MCF 10A (cell line): ENCODE measurements at regions of chr5 and their contacts with region 1.

Region 1: GRCh38 chr5:60677844-60678664 is 21.9 kb downstream of the DEPDC1B start:
- DNase-seq: peak; percentile 58
- H3K4me3 Mint-ChIP-seq: peak overlapping the region; percentile 13
- H3K27ac Mint-ChIP-seq: peak overlapping the region; percentile 84
- H3K4me1 Mint-ChIP-seq: no peaks in the 10 kb centered on the region
- H3K27me3 Mint-ChIP-seq: no peaks in the 10 kb centered on the region
- CTCF ChIP-seq: peak; percentile 47

Region 2: DNA sequence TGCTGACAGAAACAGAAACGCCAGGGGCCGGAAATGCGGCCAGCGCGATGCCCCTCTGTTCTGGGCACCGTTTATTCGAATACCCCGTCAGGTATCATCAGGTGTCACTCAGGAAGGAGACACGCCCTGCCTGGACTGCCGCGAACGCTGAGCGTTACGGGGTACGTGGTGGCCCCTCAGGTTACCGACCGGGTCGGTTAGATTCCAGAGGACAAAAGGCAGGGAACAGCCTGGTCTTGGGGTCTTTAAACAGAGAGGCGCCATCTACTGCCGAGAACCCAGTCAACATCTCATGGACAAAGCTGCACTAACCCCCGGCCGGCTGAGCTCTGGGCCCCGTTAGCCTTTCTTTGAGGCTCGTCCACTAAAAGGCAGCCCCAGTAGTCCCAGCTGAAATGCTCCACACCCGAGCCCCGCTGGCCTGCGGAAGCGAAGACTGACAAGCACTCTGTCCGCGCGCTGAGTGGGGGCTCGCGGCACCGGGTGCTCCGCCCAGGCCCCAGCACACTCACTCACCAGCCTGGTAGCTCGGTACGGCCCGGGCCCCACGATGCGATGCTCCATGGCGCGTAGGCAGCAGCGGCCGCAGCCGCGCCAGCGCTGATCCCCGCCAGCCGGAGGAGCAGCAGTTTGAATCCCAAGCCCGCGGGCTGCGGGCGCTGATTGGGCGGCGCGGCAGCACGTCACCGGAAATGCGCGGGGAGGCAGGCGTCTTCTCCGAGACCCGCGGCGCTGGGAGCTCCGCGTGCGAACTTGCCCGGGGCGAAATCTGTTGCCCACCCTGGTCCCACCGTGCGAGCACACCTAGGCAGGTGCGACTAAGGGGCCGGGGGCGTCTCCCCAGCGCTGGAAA is 21.7 kb after region 1 on chr5 and contains the start of gene DEPDC1B:
- CTCF ChIA-PET with region 1: interaction called, 24 read pairs
- POLR2A ChIA-PET with region 1: interaction called, 69 read pairs
- intact Hi-C with region 1: no loop called
- DNase-seq: peak; percentile 90
- H3K4me3 Mint-ChIP-seq: peak within 1 kb of the TSS; percentile 90
- H3K27ac Mint-ChIP-seq: peak within 1 kb of the TSS; percentile 92
- H3K4me1 Mint-ChIP-seq: peaks cover 7% of the 10 kb centered on the region
- H3K27me3 Mint-ChIP-seq: no peaks in the 10 kb centered on the region
- CTCF ChIP-seq: peak; percentile 26
- total RNA-seq, gene DEPDC1B: 6.0 and 11.3 TPM in 2 replicates

Region 3: DNA sequence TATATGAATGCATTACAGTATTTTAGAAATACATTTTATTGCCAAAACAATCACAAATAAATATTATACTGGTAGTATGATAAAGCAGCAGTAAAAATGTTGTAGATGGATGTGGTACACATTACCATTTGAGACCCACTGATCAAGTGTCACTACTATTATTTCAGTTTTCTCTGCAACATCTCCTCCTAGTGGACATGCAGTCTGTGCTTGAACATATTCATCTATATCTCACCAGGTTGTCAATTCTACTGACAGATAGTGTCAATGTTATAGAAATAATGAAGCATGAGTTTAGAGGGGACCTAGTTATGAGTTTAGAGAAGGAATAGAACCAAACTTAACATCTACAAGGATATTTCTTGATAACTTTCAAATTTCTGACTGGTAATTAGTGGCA is 205.2 kb after region 1 on chr5:
- CTCF ChIA-PET with region 1: interaction called, 11 read pairs
- POLR2A ChIA-PET with region 1: interaction called, 3 read pairs
- intact Hi-C with region 1: loop called (anchors 1 kb)
- DNase-seq: peak; percentile 16
- H3K4me3 Mint-ChIP-seq: no peak overlapping the region
- H3K27ac Mint-ChIP-seq: no peak overlapping the region
- H3K4me1 Mint-ChIP-seq: no peaks in the 10 kb centered on the region
- H3K27me3 Mint-ChIP-seq: no peaks in the 10 kb centered on the region
- CTCF ChIP-seq: peak; percentile 26

Region 4: DNA sequence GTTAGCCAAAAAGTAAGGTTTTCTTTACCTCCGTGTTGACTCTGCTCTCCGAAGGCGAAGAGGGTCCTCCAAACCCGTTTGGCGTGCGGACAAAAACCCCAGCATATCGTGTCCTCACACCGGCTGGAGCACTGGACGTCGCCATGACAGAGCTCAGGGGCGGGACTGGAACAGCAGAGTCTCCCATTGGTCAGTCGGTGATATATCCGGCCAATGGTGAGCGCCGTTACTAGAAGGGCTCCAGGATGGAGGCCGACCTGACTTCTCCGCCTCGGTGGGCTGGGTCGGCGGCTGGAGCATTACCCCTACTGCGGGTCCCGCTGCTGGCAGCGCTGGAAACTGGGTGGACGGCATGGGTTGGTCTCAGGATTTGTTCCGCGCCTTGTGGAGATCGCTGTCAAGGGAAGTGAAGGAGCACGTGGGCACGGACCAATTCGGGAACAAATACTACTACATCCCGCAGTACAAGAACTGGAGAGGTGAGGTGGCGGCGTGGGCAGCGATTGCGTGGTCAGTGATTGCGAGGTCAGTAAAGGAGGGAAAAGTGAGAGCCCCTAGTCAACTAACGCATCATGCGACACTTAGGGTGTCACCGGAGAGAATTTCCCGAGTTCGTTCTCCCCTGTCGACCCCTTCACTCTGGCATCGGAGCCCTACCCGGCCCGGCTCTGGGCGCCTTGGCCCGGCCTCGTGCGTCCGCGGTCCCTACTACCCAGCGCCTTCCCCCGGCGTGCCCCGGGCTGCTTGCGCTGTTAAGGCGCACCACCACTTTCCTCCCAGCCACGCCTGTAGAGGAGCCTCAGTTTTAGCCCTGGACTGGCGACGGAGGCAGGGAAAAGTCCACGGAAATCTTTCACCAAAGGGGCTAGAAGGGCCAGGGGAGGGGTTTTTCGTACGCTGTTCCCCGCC is 267.1 kb after region 1 on chr5 and contains the starts of genes ERCC8 and NDUFAF2:
- CTCF ChIA-PET with region 1: interaction called, 11 read pairs
- POLR2A ChIA-PET with region 1: interaction called, 8 read pairs
- intact Hi-C with region 1: loop called (anchors 5 kb)
- DNase-seq: peak; percentile 95
- H3K4me3 Mint-ChIP-seq: no peak within 1 kb of the TSS
- H3K27ac Mint-ChIP-seq: no peak within 1 kb of the TSS
- H3K4me1 Mint-ChIP-seq: no peaks in the 10 kb centered on the region
- H3K27me3 Mint-ChIP-seq: no peaks in the 10 kb centered on the region
- CTCF ChIP-seq: no peak
- total RNA-seq, gene ERCC8: 13.7 and 17.2 TPM in 2 replicates
- total RNA-seq, gene NDUFAF2: 120 and 141 TPM in 2 replicates

Region 5: DNA sequence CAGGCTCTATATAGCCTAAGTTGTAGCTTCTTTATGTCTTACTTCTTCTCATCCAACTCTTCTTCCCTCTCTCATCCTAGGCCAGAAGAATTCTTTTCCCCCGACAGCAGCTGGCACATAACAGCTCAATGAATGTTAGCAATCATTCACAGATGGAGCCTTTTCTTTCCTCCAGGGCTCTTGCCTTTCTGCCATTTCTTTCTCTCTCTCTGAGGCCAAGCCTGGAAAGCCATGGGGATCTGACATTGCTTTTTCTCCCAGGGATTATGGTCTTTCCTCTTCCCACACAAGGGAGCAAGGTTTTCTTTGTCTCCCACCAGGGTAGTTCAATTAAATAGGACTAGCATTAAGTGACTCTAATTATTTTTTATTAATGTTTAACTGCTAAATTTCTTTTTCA is 463.7 kb after region 1 on chr5:
- CTCF ChIA-PET with region 1: no interaction called
- POLR2A ChIA-PET with region 1: no interaction called
- intact Hi-C with region 1: loop called (anchors 10 kb)
- DNase-seq: no peak
- H3K4me3 Mint-ChIP-seq: no peak overlapping the region
- H3K27ac Mint-ChIP-seq: no peak overlapping the region
- H3K4me1 Mint-ChIP-seq: no peaks in the 10 kb centered on the region
- H3K27me3 Mint-ChIP-seq: no peaks in the 10 kb centered on the region
- CTCF ChIP-seq: no peak

Region 6: DNA sequence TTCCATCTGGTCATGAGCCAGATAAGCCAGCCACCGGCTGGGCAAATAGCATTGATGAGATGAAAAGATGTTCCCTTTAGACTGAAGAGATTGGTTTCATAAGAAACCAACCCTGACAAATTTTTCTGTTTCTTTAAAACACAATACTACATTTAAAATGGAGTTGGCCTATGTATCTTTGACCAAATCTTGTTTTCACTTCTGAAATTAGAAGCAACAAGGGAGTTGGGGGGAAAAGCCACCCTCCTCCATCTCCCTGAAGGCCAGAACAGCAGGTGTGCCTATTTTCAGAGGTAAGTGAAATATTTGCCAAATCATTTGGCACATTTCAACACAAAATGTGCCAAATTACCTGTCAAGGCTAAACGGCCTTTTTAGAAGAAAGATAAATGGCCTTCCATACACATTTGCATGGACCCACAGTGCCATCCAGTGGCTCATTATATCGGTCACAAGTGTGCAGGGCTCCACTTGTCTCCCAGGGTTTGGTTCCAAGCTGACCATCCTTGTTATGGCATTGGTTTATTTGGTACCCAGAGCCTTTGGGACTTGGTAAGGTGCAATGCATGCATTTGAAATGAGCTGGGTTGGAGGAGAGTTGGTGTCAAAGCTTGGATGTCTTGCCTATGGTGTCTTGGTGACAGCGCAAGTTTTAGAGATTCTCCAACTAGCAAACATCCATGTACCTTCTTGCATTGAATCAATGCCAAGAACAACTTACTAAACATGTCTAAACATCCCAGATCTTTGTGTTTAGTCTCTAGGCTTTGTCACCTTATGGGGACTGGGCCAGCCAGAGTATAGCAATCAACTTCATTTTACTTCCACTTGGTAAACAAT is 1256.0 kb after region 1 on chr5:
- CTCF ChIA-PET with region 1: interaction called, 9 read pairs
- POLR2A ChIA-PET with region 1: no interaction called
- intact Hi-C with region 1: loop called (anchors 1 kb)
- DNase-seq: peak; percentile 88
- H3K4me3 Mint-ChIP-seq: no peak overlapping the region
- H3K27ac Mint-ChIP-seq: no peak overlapping the region
- H3K4me1 Mint-ChIP-seq: peaks cover 19% of the 10 kb centered on the region
- H3K27me3 Mint-ChIP-seq: no peaks in the 10 kb centered on the region
- CTCF ChIP-seq: peak; percentile 78